Activated naive CD4-positive, alpha-beta T cell treated with anti-CD3 and anti-CD28 coated beads for 36 hours (primary cell): ENCODE measurements at regions of chr6 and their contacts with region 1.

Region 1: DNA sequence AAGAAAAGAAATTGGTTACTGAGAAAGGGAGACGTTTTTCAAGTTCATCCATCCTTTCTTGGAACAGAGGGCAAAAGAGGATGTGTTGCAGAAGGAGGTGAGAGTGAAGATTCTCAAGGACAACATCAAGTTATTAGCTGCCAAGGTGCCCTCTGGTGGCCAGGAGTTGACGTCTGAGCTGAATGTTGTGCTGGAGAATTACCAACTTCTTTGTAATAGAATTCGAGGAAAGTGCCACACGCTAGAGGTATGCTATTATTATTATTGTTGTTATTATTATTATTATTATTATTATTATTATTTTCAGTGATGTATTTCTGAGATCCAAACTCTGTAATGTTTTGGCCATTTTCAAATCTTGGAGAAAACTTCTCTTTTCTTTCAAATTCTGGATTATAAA is 197.0 kb downstream of the UTRN start:
- DNase-seq: peak; percentile 88
- H3K4me3 Mint-ChIP-seq: no peak overlapping the region
- H3K27ac Mint-ChIP-seq: no peak overlapping the region
- H3K4me1 Mint-ChIP-seq: peaks cover 3% of the 10 kb centered on the region
- H3K27me3 Mint-ChIP-seq: no peaks in the 10 kb centered on the region

Region 2: GRCh38 chr6:144104898-144105487 is 377.1 kb before region 1 on chr6:
- CTCF ChIA-PET with region 1: interaction called, 10 read pairs
- intact Hi-C with region 1: loop called (anchors 1 kb)
- DNase-seq: peak; percentile 48
- H3K4me3 Mint-ChIP-seq: no peak overlapping the region
- H3K27ac Mint-ChIP-seq: no peak overlapping the region
- H3K4me1 Mint-ChIP-seq: peaks cover 11% of the 10 kb centered on the region
- H3K27me3 Mint-ChIP-seq: no peaks in the 10 kb centered on the region

Region 3: GRCh38 chr6:144334131-144334708 is 147.9 kb before region 1 on chr6:
- CTCF ChIA-PET with region 1: interaction called, 5 read pairs
- intact Hi-C with region 1: loop called (anchors 2 kb)
- DNase-seq: peak; percentile 83
- H3K4me3 Mint-ChIP-seq: peak overlapping the region; percentile 59
- H3K27ac Mint-ChIP-seq: peak overlapping the region; percentile 50
- H3K4me1 Mint-ChIP-seq: peaks cover 45% of the 10 kb centered on the region
- H3K27me3 Mint-ChIP-seq: no peaks in the 10 kb centered on the region

Region 4: GRCh38 chr6:144469144-144469575 is 13.0 kb before region 1 on chr6:
- CTCF ChIA-PET with region 1: interaction called, 13 read pairs
- intact Hi-C with region 1: no loop called
- DNase-seq: peak; percentile 43
- H3K4me3 Mint-ChIP-seq: peak overlapping the region; percentile 42
- H3K27ac Mint-ChIP-seq: peak overlapping the region; percentile 46
- H3K4me1 Mint-ChIP-seq: peaks cover 20% of the 10 kb centered on the region
- H3K27me3 Mint-ChIP-seq: no peaks in the 10 kb centered on the region

Region 5: GRCh38 chr6:144510859-144511258 is 28.7 kb after region 1 on chr6:
- CTCF ChIA-PET with region 1: no interaction called
- intact Hi-C with region 1: no loop called
- DNase-seq: no peak
- H3K4me3 Mint-ChIP-seq: no peak overlapping the region
- H3K27ac Mint-ChIP-seq: no peak overlapping the region
- H3K4me1 Mint-ChIP-seq: no peaks in the 10 kb centered on the region
- H3K27me3 Mint-ChIP-seq: no peaks in the 10 kb centered on the region

Region 6: DNA sequence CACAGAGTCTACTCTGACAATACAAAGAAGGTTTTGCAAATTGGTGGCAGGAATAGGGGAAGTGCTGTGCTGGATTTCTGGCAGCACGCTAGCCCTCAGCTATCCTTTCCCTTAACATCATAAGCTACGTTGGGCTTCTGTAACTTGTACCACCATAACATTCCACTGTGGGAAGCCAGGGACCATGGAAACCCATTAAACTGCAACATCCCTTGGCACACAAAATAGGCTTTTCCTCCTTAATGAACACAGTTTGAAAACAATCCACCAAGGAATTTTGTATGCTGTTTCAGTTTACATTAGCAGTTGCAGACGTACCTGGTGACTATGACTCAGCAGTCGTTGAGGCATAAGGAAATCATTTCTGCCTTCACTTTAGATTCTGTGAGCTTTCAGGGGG is 1857.6 kb after region 1 on chr6:
- CTCF ChIA-PET with region 1: no interaction called
- intact Hi-C with region 1: no loop called
- DNase-seq: no peak
- H3K4me3 Mint-ChIP-seq: no peak overlapping the region
- H3K27ac Mint-ChIP-seq: no peak overlapping the region
- H3K4me1 Mint-ChIP-seq: no peaks in the 10 kb centered on the region
- H3K27me3 Mint-ChIP-seq: peaks cover 9% of the 10 kb centered on the region